ENCODE measurements at regions of chr16 and their contacts with region 1.

Region 1: GRCh38 chr16:10812312-10813098 is 6.1 kb downstream of the TVP23A start:
- DNase-seq: no peak
- ATAC-seq: peak in 1 of 4 donors; percentile 15
- H3K4me3 ChIP-seq: no peak overlapping the region
- H3K27ac ChIP-seq: peak overlapping the region in 1 of 12 donors; percentile 12
- H3K4me1 ChIP-seq: peaks cover 0 to 4% (median 0%) of the 10 kb centered on the region in 12 donors
- H3K27me3 ChIP-seq: no peaks in the 10 kb centered on the region
- CTCF ChIP-seq: no peak
- POLR2A ChIP-seq: no peak

Region 2: DNA sequence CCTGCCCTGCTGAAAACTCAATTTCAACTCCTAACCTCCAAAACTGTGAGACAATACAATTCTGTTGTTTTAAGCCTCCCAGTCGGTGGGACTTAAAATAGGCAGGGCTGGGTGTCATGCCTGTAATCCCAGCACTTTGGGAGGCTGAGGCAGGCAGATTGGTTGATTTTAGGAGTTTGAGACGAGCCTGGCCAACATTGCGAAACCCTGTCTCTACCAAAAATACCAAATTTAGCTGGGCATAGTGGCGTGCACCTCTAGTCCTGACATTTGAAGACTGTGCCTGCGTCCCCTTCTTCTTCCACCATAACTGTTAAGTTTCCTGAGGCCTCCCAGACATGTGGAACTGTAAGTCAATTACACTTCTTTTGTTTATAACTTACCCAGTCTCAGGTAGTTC is 462.7 kb before region 1 on chr16:
- intact Hi-C with region 1: no loop called
- DNase-seq: no peak
- ATAC-seq: no peak
- H3K4me3 ChIP-seq: no peak overlapping the region
- H3K27ac ChIP-seq: no peak overlapping the region
- H3K4me1 ChIP-seq: no peaks in the 10 kb centered on the region
- H3K27me3 ChIP-seq: no peaks in the 10 kb centered on the region
- CTCF ChIP-seq: no peak
- POLR2A ChIP-seq: no peak

Region 3: GRCh38 chr16:10752843-10753523 is 59.5 kb before region 1 on chr16:
- intact Hi-C with region 1: loop called in 1 of 10 experiments (anchors 5 kb)
- DNase-seq: peak; percentile 56 to 86 (median 59)
- ATAC-seq: peak; percentile 5 to 60 (median 30)
- H3K4me3 ChIP-seq: no peak overlapping the region
- H3K27ac ChIP-seq: peak overlapping the region in 3 of 12 donors; percentile 36 to 84 (median 46)
- H3K4me1 ChIP-seq: peaks cover 0 to 49% (median 6%) of the 10 kb centered on the region in 12 donors
- H3K27me3 ChIP-seq: no peaks in the 10 kb centered on the region
- CTCF ChIP-seq: no peak
- POLR2A ChIP-seq: no peak

Region 4: GRCh38 chr16:10776280-10776679 is 36.2 kb before region 1 on chr16:
- intact Hi-C with region 1: no loop called
- DNase-seq: no peak
- ATAC-seq: no peak
- H3K4me3 ChIP-seq: no peak overlapping the region
- H3K27ac ChIP-seq: no peak overlapping the region
- H3K4me1 ChIP-seq: peaks cover 0 to 8% (median 0%) of the 10 kb centered on the region in 12 donors
- H3K27me3 ChIP-seq: no peaks in the 10 kb centered on the region
- CTCF ChIP-seq: no peak
- POLR2A ChIP-seq: no peak